ENCODE measurements at regions of chr11 and their contacts with region 1.

Region 1: GRCh38 chr11:126963603-126964363 is 36.8 kb downstream of the KIRREL3 start:
- DNase-seq: no peak
- ATAC-seq: no peak
- H3K4me3 ChIP-seq: no peak overlapping the region
- H3K27ac ChIP-seq: no peak overlapping the region
- H3K4me1 ChIP-seq: no peaks in the 10 kb centered on the region
- H3K27me3 ChIP-seq: no peaks in the 10 kb centered on the region

Region 2: GRCh38 chr11:127013550-127013949 is 49.8 kb after region 1 on chr11:
- intact Hi-C with region 1: loop called in 1 of 2 experiments (anchors 5 kb)
- DNase-seq: no peak
- ATAC-seq: no peak
- H3K4me3 ChIP-seq: no peak overlapping the region
- H3K27ac ChIP-seq: no peak overlapping the region
- H3K4me1 ChIP-seq: no peaks in the 10 kb centered on the region
- H3K27me3 ChIP-seq: peaks cover 7% of the 10 kb centered on the region in 2 donors

Region 3: DNA sequence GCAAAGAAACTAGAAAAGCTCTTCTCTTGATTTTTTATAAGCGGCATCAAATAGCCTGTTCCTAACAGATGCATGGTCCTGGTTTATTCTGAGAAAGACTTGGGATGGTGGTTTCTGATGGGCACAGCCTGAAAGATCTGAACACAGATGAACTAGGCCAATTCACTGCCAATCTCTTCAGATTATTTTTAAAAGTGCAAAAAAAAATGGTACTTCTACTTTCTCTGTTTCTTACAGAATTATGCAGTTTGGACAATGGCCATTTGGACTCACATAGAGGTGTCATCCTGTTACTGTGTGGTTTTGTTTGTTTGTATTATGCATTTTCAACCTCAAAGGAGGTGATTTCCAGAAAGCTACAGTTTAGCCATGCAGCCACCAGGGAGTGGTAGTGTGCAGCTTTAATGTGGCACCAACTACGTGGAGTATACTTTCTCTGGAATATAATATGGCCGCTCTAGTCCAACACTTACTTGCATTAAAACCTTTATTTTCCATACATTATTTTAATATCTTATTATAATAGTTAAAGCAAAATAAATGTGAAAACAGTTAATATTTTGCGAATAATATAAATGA is 506.6 kb after region 1 on chr11:
- intact Hi-C with region 1: no loop called
- DNase-seq: no peak
- ATAC-seq: no peak
- H3K4me3 ChIP-seq: no peak overlapping the region
- H3K27ac ChIP-seq: no peak overlapping the region
- H3K4me1 ChIP-seq: no peaks in the 10 kb centered on the region
- H3K27me3 ChIP-seq: no peaks in the 10 kb centered on the region